CD8-positive, alpha-beta T cell (primary cell): ENCODE measurements at regions of chr21 and their contacts with region 1.

Region 1: GRCh38 chr21:35063450-35064172 is 14.5 kb upstream of the RUNX1 start:
- DNase-seq: no peak
- ATAC-seq: no peak
- H3K4me3 ChIP-seq: no peak overlapping the region
- H3K4me3 Mint-ChIP-seq: no peak overlapping the region
- H3K27ac ChIP-seq: no peak overlapping the region
- H3K27ac Mint-ChIP-seq: no peak overlapping the region
- H3K4me1 ChIP-seq: no peaks in the 10 kb centered on the region
- H3K4me1 Mint-ChIP-seq: peaks cover 9% of the 10 kb centered on the region
- H3K27me3 ChIP-seq: no peaks in the 10 kb centered on the region
- H3K27me3 Mint-ChIP-seq: no peaks in the 10 kb centered on the region
- CTCF ChIP-seq: no peak

Region 2: DNA sequence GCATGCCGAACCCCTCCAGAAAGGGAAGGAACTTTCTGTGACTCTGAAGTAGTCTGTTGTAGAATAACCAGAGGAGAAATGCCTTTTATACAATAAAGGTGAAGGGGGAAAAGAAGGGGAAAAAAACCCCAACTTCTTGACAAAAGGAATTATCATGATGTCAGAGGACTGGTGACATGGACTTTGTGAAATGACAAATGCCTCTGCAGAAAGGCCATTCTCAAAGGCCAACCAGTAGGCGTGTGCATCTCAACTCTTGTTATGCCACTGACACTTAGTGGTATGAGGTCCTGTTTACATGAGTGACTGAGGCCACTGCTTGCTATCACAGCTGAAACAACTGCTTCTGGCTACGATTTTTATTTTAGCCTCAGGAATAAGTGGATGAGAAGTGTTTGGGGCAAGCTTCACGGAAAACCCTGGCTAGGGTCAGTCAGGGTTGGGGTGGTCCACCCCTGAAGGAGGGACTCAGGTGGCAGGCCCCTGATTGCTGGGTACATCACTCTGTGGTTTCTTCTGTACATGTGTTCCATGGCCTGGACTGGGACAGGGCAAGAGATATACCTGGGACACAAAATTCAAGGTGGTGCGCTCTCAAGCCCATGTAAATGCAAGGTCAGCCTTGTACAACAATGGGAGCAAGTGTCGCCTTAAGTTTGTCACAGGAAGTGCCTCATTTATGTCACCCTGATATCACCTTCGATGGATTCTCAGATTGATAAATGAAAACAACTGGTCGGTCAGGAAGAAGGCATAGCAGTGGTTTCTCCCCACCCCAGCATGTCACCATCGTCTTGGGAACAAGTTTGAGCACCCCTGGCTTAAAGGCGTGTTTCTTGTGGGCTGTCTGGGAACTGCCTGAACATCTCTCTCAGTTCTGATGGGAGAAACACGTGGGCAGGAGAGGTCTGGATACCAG is 26.9 kb before region 1 on chr21:
- CTCF ChIA-PET with region 1: no interaction called
- POLR2A ChIA-PET with region 1: no interaction called
- intact Hi-C with region 1: loop called in 1 of 2 experiments (anchors 1 kb)
- DNase-seq: peak in 2 of 9 experiments; percentile 42 to 67
- ATAC-seq: peak; percentile 18
- H3K4me3 ChIP-seq: peak overlapping the region in 1 of 2 experiments; percentile 4
- H3K4me3 Mint-ChIP-seq: peak overlapping the region; percentile 70
- H3K27ac ChIP-seq: peak overlapping the region; percentile 2 to 81
- H3K27ac Mint-ChIP-seq: peak overlapping the region; percentile 92
- H3K4me1 ChIP-seq: peaks cover 82% of the 10 kb centered on the region
- H3K4me1 Mint-ChIP-seq: peaks cover 95% of the 10 kb centered on the region
- H3K27me3 ChIP-seq: no peaks in the 10 kb centered on the region
- H3K27me3 Mint-ChIP-seq: no peaks in the 10 kb centered on the region
- CTCF ChIP-seq: no peak